Endothelial cell of umbilical vein (primary cell): ENCODE measurements at regions of chr9 and their contacts with region 1.

Region 1: DNA sequence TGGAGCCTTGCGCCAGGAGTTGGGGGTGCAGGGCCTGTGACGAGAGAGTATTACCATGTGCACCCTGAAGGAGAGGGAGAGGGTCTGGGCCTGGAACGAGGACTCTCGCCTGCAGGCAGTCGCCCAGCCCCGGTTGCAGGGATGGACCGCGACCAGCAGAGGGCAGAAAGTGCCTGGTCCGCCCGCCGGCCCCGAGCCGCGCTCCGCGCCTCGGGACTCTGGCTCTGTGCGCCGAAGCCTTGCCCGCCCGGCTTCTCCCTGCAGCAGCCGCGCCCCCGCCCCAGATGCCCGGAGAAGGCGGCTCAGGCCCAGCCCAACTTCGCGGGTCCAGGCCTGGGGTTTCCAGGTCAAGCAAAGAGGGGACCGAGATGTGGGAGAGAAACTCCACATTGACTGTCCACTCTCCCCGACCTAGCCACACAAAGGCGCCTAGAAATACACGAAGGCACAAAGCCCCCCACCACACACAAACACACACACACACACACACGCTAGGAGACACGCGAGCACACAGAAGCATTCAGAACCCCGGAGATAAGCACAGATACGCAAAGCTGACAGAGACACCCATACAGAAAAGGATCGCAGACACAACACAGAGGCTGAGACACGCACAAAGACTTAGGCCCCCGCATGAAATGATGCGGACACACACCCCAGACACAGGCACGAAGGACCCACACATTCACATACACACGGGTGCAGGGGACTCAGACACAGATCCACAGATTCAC is 2.0 kb upstream of the LMX1B start:
- DNase-seq: peak; percentile 46
- H3K4me3 ChIP-seq: no peak overlapping the region
- H3K27ac ChIP-seq: no peak overlapping the region
- H3K4me1 ChIP-seq: no peaks in the 10 kb centered on the region
- H3K27me3 ChIP-seq: peaks cover 66% of the 10 kb centered on the region in 2 experiments
- CTCF ChIP-seq: peak; percentile 80 to 91
- POLR2A ChIP-seq: no peak

Region 2: DNA sequence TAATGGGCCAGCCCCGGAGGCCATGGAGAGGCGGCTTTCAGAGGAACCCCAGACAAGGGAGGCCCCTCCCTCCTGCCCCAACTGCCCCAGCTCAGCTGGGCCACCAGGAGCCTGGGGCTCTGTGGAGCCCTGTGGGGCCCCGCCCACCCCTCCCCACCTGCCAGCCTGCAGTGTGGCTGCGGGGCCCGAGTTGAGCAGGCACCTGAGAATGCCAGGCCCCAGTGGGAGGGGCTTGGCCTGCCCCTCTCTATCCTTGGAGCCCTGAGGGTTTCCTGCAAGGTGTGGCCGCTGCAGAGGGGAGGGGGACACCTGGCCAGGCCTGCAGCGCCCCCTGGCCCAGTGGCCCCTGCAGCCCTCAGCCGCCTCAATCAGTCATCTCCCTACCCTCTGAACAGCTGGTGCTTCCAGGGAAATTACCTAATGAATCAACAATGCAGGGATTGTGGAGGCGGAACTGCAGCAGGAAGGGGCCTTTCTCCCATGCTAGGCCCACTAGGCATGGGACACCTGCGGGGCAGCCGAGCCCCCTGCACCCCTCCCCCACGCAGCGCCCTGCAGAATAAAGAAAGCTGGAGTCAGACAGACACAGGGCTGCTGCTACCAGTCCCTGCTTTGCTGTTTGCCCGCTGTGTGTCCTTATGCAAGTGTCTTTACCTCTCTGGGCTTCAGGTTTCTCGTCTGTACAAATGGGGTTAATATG is 49.9 kb after region 1 on chr9:
- CTCF ChIA-PET with region 1: interaction called, 3 read pairs
- POLR2A ChIA-PET with region 1: no interaction called
- dilution Hi-C with region 1: no loop called
- intact Hi-C with region 1: loop called (anchors 10 kb)
- DNase-seq: peak; percentile 62
- H3K4me3 ChIP-seq: no peak overlapping the region
- H3K27ac ChIP-seq: no peak overlapping the region
- H3K4me1 ChIP-seq: peaks cover 12% of the 10 kb centered on the region
- H3K27me3 ChIP-seq: peaks cover 14 to 18% of the 10 kb centered on the region in 2 experiments
- CTCF ChIP-seq: peak; percentile 18 to 33
- POLR2A ChIP-seq: no peak

Region 3: DNA sequence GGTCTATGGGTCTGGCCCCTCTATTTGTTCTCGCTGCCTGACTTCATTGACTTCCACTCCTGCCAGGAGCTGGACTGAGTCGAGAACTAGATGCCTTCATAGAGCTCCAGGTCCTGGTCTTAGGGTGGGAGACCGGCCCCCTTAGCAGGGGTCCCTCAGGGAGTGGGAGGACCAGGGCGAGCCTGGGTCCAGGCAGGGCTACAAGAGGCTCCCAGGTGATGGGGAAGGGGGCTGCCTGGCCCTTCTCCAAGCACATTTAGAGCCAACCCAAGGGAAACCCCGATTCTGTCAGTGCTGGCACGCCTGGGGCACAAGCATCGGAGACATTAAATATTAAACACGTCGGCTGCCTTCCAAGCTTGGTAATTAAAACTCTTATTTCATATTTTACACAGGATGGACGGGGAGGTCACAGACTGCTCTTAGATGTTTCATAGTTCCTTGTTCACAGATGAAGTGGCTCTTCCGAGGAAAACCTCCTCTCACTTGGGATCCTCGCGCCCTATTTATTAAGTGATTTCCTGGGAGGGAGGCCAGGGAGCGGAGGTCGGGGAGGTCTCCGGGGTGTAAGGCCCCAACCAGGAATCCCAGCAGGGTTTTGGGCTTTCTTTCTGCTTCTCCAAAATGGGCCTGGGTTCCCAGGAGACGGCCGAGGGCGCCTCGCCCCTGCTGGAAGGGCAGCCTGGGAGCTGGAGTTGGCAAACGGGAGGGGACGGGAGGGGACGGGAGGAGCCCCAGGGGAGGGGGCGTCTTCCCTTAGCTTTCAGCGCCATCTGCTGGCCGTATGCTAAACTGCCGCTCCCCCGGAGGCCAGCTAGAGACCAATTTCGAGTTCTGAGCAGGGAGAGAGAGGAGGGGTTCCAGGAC is 169.7 kb after region 1 on chr9:
- CTCF ChIA-PET with region 1: interaction called, 15 read pairs
- POLR2A ChIA-PET with region 1: no interaction called
- dilution Hi-C with region 1: no loop called
- intact Hi-C with region 1: loop called (anchors 1 kb)
- DNase-seq: peak; percentile 69
- H3K4me3 ChIP-seq: no peak overlapping the region
- H3K27ac ChIP-seq: no peak overlapping the region
- H3K4me1 ChIP-seq: no peaks in the 10 kb centered on the region
- H3K27me3 ChIP-seq: peaks cover under 1% of the 10 kb centered on the region in 2 experiments
- CTCF ChIP-seq: peak; percentile 78 to 90
- POLR2A ChIP-seq: no peak